WTC11 (cell line): ENCODE measurements at regions of chr1 and their contacts with region 1.

Region 1: GRCh38 chr1:150061632-150062101 is 5.9 kb upstream of the VPS45 start:
- DNase-seq: no peak
- ATAC-seq: no peak
- H3K4me3 Mint-ChIP-seq: no peak overlapping the region
- H3K27ac Mint-ChIP-seq: no peak overlapping the region
- H3K4me1 Mint-ChIP-seq: peaks cover 7% of the 10 kb centered on the region
- H3K27me3 Mint-ChIP-seq: no peaks in the 10 kb centered on the region
- CTCF ChIP-seq: no peak

Region 2: GRCh38 chr1:150051089-150051373 is 10.6 kb before region 1 on chr1:
- CTCF ChIA-PET with region 1: interaction called, 11 read pairs
- POLR2A ChIA-PET with region 1: no interaction called
- DNase-seq: no peak
- ATAC-seq: no peak
- H3K4me3 Mint-ChIP-seq: no peak overlapping the region
- H3K27ac Mint-ChIP-seq: no peak overlapping the region
- H3K4me1 Mint-ChIP-seq: peaks cover 7% of the 10 kb centered on the region
- H3K27me3 Mint-ChIP-seq: no peaks in the 10 kb centered on the region
- CTCF ChIP-seq: no peak

Region 3: GRCh38 chr1:150080784-150081183 is 19.1 kb after region 1 on chr1:
- CTCF ChIA-PET with region 1: no interaction called
- POLR2A ChIA-PET with region 1: no interaction called
- DNase-seq: no peak
- ATAC-seq: no peak
- H3K4me3 Mint-ChIP-seq: no peak overlapping the region
- H3K27ac Mint-ChIP-seq: no peak overlapping the region
- H3K4me1 Mint-ChIP-seq: no peaks in the 10 kb centered on the region
- H3K27me3 Mint-ChIP-seq: no peaks in the 10 kb centered on the region
- CTCF ChIP-seq: no peak

Region 4: GRCh38 chr1:150410582-150411101 is 349.0 kb after region 1 on chr1:
- CTCF ChIA-PET with region 1: no interaction called
- POLR2A ChIA-PET with region 1: no interaction called
- DNase-seq: no peak
- ATAC-seq: no peak
- H3K4me3 Mint-ChIP-seq: no peak overlapping the region
- H3K27ac Mint-ChIP-seq: peak overlapping the region; percentile 51
- H3K4me1 Mint-ChIP-seq: peaks cover 40% of the 10 kb centered on the region
- H3K27me3 Mint-ChIP-seq: no peaks in the 10 kb centered on the region
- CTCF ChIP-seq: no peak